Activated CD4-positive, alpha-beta T cell treated with anti-CD3 and anti-CD28 coated beads, Interleukin-2, amount 10 ng/mL, durations not matched to agents 24 days and 14 days (primary cell): ENCODE measurements at regions of chr9 and their contacts with region 1.

Region 1: DNA sequence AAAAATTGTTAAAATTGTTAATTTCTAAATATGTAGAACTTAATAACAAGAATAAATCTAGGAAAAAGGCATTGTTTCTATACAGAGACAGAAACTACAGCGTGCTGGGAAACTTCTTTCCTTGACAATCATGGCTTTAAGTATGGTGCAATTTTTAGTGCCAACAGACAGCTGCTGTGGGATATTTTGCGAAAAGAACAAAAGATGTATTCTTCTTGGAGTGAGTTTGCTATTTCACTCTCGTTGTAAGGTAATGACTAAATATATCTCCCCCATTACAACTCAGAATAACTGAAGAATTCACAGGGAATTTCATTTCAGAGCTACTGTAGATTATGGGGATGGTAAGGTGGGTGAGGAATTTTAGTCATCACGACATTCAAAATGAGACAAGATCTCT is 2055.0 kb upstream of the ACO1 start:
- DNase-seq: no peak
- H3K4me3 Mint-ChIP-seq: no peak overlapping the region
- H3K27ac Mint-ChIP-seq: no peak overlapping the region
- H3K4me1 Mint-ChIP-seq: no peaks in the 10 kb centered on the region
- H3K27me3 Mint-ChIP-seq: no peaks in the 10 kb centered on the region

Region 2: GRCh38 chr9:30349526-30350513 is 20.4 kb after region 1 on chr9:
- intact Hi-C with region 1: no loop called
- DNase-seq: no peak
- H3K4me3 Mint-ChIP-seq: no peak overlapping the region
- H3K27ac Mint-ChIP-seq: no peak overlapping the region
- H3K4me1 Mint-ChIP-seq: no peaks in the 10 kb centered on the region
- H3K27me3 Mint-ChIP-seq: no peaks in the 10 kb centered on the region

Region 3: GRCh38 chr9:30382271-30382670 is 52.8 kb after region 1 on chr9:
- intact Hi-C with region 1: loop called (anchors 10 kb)
- DNase-seq: no peak
- H3K4me3 Mint-ChIP-seq: no peak overlapping the region
- H3K27ac Mint-ChIP-seq: no peak overlapping the region
- H3K4me1 Mint-ChIP-seq: no peaks in the 10 kb centered on the region
- H3K27me3 Mint-ChIP-seq: no peaks in the 10 kb centered on the region